Common myeloid progenitor, CD34-positive (primary cell): ENCODE measurements at regions of chr5 and their contacts with region 1.

Region 1: DNA sequence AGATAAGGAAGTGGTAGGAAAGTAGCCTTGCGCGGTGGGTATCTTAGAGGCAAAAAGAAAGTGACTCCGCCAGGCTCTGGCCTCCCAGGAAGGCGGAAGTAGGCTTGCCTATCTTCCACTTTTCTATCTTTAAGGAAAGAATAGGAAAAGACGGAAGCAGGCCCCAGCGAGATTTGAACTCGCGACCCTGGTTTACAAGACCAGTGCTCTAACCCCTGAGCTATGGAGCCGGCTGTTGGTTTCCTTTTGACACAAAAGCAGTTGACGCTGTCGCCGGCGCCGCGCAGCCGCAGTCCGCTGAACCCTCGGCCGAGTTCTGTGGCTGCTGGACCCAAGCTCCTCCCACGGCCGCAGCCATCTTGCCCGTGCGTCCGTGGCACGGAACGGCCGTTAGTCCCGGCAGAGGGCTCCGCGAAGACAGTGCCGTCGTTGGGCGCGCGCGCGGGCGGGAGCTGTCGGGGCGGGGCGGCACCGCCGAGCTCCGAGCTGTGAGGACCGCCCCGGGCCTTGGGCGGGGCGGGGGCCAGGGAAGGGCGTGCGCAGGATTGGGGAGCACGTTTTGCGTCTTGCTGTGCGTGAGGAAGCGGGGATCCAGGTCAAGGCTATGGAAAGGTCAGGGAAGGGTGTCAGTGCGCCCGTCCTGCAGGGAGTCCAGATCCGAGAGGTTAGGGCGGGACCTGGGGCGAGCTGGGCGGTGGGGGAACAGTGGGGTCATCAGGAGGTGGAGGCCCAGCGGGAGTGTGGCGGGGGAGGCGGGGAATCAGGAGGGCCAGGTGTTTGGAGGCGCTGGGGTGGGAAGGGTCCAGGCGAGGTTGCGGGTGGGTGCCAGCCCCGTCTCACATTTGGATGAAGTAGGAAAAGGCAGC is 13.2 kb downstream of the TRIM7 start:
- DNase-seq: peak; percentile 93 to 96 (median 95)
- H3K4me3 ChIP-seq: peak overlapping the region; percentile 85 to 99 (median 91)
- H3K27ac ChIP-seq: peak overlapping the region; percentile 15 to 75
- H3K4me1 ChIP-seq: peaks cover 0 to 39% (median 28%) of the 10 kb centered on the region in 4 experiments
- H3K27me3 ChIP-seq: peaks cover 0 to 2% (median 0%) of the 10 kb centered on the region in 5 experiments

Region 2: DNA sequence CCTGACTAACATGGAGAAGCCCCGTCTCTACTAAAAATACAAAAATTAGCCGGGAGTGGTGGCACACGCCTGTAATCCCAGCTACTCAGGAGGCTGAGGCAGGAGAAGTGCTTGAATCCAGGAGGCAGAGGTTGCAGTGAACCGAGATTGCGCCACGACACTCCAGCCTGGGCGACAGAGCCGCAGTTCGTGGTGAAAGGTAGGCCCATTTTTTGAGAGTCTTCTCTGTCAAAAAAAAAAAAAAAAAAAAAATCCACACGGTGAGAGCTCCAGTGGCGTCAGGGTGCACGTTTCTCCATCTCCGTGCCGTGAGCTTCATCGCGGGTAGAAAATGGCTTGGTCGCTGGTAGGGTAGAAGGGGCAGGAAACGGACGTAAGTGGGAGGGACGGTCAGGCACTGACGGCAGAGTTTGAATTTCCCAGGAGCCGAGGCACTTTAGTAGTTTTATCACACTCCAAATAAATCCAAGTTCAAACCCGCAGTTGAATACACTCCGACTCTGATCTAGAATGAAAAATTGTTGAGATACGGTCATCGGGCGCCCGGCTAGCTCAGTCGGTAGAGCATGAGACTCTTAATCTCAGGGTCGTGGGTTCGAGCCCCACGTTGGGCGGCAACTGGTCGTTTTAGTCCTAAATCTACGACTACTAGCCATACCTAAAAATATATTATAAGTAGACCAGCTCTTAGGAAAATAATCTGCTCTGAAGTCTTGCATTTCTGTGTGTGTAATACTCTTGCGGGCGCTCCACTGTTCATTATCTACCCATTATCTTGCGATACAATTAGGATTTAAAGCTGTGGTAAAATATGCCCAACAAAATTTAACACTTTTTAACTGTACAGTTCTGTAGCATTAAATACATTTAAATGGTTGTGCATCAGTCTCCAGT is 15.7 kb after region 1 on chr5:
- CTCF ChIA-PET with region 1: interaction called, 105 read pairs
- POLR2A ChIA-PET with region 1: interaction called, 10 read pairs
- DNase-seq: peak; percentile 86 to 92 (median 91)
- H3K4me3 ChIP-seq: peak overlapping the region; percentile 38 to 83 (median 73)
- H3K27ac ChIP-seq: peak overlapping the region in 1 of 2 experiments; percentile 60
- H3K4me1 ChIP-seq: peaks cover 1 to 41% (median 34%) of the 10 kb centered on the region in 4 experiments
- H3K27me3 ChIP-seq: peaks cover 0 to 34% (median 11%) of the 10 kb centered on the region in 5 experiments

Region 3: GRCh38 chr5:181223058-181223728 is 31.4 kb after region 1 on chr5 and contains the start of gene TRIM41:
- CTCF ChIA-PET with region 1: interaction called, 10 read pairs
- POLR2A ChIA-PET with region 1: interaction called, 6 read pairs
- DNase-seq: peak; percentile 99
- H3K4me3 ChIP-seq: peak within 1 kb of the TSS; percentile 70 to 95 (median 89)
- H3K27ac ChIP-seq: peak within 1 kb of the TSS; percentile 90 to 93
- H3K4me1 ChIP-seq: peaks cover 3 to 39% (median 24%) of the 10 kb centered on the region in 4 experiments
- H3K27me3 ChIP-seq: no peaks in the 10 kb centered on the region